ENCODE measurements at regions of chr7 and their contacts with region 1.

Region 1: DNA sequence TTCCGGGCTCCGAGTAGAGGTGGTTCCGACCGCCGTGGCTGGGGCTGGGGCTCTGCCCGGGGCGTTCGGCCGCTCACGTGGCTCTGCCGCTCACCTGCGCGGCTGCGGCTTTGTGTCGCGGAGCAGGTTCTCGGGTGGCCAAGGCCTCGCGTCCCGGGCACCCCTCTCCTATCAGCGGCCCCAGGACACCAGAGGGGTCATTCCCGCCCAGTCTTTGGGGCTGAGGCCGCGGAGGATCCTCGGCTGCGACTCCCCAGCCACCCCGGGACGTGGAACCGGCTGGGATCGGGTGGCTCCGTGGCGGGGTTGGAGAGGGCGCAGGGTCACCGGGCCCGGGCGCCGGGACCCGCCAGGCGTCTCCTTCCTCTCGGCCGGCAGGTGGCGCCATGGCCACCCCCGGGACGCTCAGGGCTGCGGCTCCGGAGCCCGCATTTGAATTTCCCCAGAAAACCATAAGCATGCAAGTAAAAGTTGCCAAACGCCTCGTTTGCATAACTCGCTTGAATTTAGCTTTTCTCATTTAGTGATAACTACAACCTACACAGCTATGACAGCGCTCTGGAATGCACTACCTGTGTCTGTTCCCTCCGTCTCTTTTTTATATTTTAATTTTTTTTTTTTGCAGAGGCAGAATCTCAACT is 1.2 kb downstream of the COL26A1 start:
- DNase-seq: peak; percentile 69 to 86 (median 81)
- ATAC-seq: peak; percentile 90 to 94
- H3K4me3 ChIP-seq: peak overlapping the region; percentile 39
- H3K27ac ChIP-seq: no peak overlapping the region
- H3K4me1 ChIP-seq: no peaks in the 10 kb centered on the region
- H3K27me3 ChIP-seq: no peaks in the 10 kb centered on the region

Region 2: DNA sequence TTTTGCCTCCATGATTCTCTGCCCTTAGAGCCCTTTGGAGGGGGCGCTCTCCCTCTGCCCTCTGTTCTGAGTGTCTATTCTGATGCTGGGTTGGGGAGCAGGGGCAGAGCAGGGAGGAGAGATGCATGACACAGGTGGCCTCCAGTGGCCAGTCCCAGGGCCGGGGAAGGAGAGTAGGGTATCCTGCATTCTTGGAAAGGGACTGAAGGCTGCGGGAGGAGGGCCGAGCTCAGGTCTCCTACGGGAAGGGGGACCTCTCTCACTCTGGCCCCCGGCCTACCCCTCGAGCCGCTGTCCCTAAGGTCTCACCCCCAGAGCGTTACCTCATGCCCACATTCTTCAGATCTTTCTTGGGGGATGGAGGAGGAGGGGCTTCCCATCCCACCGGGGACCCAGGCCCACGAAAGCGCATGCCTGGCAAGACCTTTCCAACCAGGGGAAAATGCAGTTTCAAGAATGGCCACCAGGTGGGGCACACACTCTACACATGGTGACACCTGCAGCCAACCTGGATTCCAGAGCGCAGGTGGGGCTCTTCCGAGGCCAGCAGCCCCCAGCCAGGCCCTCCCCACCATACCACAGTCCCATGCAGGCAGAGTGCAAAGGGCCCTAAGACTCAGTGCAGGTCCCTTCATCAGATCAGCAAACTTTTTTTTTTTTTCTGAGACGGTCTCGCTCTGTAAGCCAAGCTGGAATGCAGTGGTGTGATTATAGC is 178.8 kb after region 1 on chr7:
- intact Hi-C with region 1: loop called (anchors 5 to 10 kb)
- DNase-seq: peak; percentile 63 to 85 (median 76)
- ATAC-seq: peak; percentile 22 to 44
- H3K4me3 ChIP-seq: no peak overlapping the region
- H3K27ac ChIP-seq: no peak overlapping the region
- H3K4me1 ChIP-seq: no peaks in the 10 kb centered on the region
- H3K27me3 ChIP-seq: no peaks in the 10 kb centered on the region

Region 3: DNA sequence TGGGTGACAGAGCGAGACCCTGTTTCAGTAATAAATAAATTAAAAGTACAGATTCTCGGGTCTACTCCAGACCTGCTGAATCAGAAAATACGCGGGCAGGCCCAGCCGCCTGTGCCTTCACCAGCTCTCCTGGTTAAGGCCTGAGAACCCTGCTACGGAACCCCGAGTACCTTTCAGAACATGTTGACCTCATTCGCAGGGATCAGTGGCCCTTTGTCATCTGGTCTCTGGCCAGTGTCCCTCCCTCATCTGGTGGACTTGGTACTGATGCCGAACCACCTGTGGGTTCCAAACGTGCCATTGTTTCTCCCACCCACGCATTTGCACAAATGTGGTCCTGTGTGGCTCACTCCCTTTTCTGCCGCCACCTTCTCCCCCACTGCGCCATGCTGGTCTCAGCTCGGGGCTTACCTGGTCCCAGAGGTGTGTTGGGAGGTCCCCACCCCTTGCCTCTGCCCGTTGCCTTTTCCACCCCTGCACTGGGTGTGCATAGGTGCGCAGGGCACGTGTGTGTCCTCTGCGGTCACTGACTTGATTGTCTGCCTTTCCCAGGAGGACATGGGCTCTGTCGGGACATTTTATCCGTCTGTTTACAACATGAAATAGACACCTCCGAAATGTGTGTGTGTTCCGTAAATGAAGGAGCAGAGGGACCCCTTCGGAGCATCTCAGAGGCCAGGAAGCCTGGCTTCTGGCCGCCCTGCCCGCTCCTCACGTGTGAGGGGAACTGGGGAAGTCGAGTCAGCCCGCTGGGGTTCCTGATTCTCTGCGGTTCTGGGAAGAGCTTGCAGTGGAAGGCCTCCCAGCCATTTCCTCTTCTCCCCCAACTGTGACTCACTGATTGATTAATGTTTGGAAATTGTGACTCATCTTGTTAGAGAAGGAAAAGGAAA is 588.7 kb after region 1 on chr7:
- intact Hi-C with region 1: no loop called
- DNase-seq: peak in 1 of 3 donors; percentile 26
- ATAC-seq: peak in 1 of 2 donors; percentile 38
- H3K4me3 ChIP-seq: no peak overlapping the region
- H3K27ac ChIP-seq: peak overlapping the region; percentile 21
- H3K4me1 ChIP-seq: peaks cover 10% of the 10 kb centered on the region
- H3K27me3 ChIP-seq: no peaks in the 10 kb centered on the region